T-cell (primary cell): ENCODE measurements at regions of chr5 and their contacts with region 1.

Region 1: DNA sequence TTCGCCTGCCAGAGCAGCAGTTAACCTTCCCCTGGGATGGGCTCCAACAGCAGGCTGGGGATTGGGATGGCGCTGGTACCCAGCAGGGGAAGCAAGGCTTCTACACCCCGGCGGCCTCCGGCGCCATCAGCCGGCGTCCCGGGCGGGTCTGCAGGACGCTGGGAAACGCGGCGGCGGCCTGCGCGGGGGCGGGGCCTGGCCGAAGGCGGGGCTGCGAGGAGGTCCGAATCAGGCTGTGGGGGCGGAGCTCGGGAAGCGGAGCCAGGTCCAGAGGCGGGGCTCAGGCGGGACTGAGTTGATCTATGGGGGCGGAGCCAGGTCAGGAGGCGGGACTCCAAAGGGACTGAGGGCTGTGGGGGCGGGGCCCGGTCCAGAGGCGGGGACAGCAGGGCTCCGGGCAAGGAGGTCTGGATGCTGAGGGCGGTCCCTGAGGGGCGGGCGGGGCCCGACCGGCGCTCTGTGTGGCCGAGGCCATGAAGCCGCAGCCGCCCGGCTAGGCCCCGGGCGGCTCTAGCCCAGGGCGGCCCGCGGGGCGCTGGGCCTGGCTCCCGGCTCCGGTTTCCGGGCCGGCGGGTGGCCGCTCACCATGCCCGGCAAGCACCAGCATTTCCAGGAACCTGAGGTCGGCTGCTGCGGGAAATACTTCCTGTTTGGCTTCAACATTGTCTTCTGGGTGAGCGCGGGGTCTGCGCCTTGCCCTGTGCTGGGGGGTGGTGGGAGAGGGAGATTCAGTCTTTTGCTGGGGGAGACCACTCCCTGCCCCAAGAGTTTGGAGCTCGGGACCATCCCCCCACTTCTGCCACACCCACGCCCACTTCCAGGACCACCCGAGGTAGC is at the start of gene TSPAN17:
- DNase-seq: peak; percentile 73 to 100 (median 90)
- ATAC-seq: peak; percentile 90 to 95 (median 93)
- H3K4me3 ChIP-seq: peak within 1 kb of the TSS; percentile 47 to 63
- H3K4me3 Mint-ChIP-seq: peak within 1 kb of the TSS; percentile 79 to 90 (median 83)
- H3K27ac ChIP-seq: peak within 1 kb of the TSS; percentile 53
- H3K27ac Mint-ChIP-seq: peak within 1 kb of the TSS; percentile 93 to 95
- H3K4me1 ChIP-seq: peaks cover 7 to 60% of the 10 kb centered on the region in 2 experiments
- H3K4me1 Mint-ChIP-seq: peaks cover 52 to 57% (median 55%) of the 10 kb centered on the region in 3 donors
- H3K27me3 ChIP-seq: no peaks in the 10 kb centered on the region
- H3K27me3 Mint-ChIP-seq: no peaks in the 10 kb centered on the region
- total RNA-seq, gene TSPAN17: 20.2 to 39.3 (median 30.0) TPM

Region 2: GRCh38 chr5:175393897-175394296 is 1253.4 kb before region 1 on chr5:
- CTCF ChIA-PET with region 1: no interaction called
- POLR2A ChIA-PET with region 1: no interaction called
- DNase-seq: no peak
- ATAC-seq: no peak
- H3K4me3 ChIP-seq: no peak overlapping the region
- H3K4me3 Mint-ChIP-seq: no peak overlapping the region
- H3K27ac ChIP-seq: no peak overlapping the region
- H3K27ac Mint-ChIP-seq: no peak overlapping the region
- H3K4me1 ChIP-seq: no peaks in the 10 kb centered on the region
- H3K4me1 Mint-ChIP-seq: no peaks in the 10 kb centered on the region
- H3K27me3 ChIP-seq: peaks cover 0 to 14% of the 10 kb centered on the region in 2 experiments
- H3K27me3 Mint-ChIP-seq: peaks cover 17 to 26% of the 10 kb centered on the region in 2 donors

Region 3: DNA sequence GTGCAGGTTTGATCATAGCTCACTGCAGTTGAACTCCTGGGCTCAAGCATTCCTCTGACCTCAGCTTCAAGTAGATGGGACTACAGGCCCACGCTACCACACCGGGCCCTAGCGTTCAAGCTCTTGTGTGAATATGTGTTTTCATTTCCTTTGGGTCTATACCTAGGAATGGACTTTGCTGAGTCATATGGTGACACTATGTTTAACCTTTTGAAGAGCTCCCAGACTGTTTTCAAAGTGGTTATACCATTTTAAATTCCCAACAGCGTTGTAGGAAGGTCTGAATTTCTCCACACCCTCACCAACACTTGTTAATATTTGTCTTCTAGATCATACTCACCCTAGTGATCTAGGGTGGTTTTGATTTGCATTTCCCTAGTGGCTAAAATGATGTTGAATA is 165.5 kb before region 1 on chr5:
- CTCF ChIA-PET with region 1: no interaction called
- POLR2A ChIA-PET with region 1: no interaction called
- DNase-seq: no peak
- ATAC-seq: no peak
- H3K4me3 ChIP-seq: no peak overlapping the region
- H3K4me3 Mint-ChIP-seq: no peak overlapping the region
- H3K27ac ChIP-seq: no peak overlapping the region
- H3K27ac Mint-ChIP-seq: no peak overlapping the region
- H3K4me1 ChIP-seq: peaks cover 0 to 3% of the 10 kb centered on the region in 2 experiments
- H3K4me1 Mint-ChIP-seq: peaks cover 32 to 40% (median 33%) of the 10 kb centered on the region in 3 donors
- H3K27me3 ChIP-seq: no peaks in the 10 kb centered on the region
- H3K27me3 Mint-ChIP-seq: no peaks in the 10 kb centered on the region

Region 4: GRCh38 chr5:176660860-176661641 is 13.8 kb after region 1 on chr5:
- CTCF ChIA-PET with region 1: interaction called, 9 to 15 read pairs
- POLR2A ChIA-PET with region 1: no interaction called
- DNase-seq: peak; percentile 53 to 91 (median 69)
- ATAC-seq: peak; percentile 74 to 80 (median 78)
- H3K4me3 ChIP-seq: peak overlapping the region in 1 of 2 donors; percentile 14
- H3K4me3 Mint-ChIP-seq: peak overlapping the region in 2 of 3 donors; percentile 24 to 40
- H3K27ac ChIP-seq: no peak overlapping the region
- H3K27ac Mint-ChIP-seq: peak overlapping the region; percentile 52 to 67
- H3K4me1 ChIP-seq: peaks cover 7 to 36% of the 10 kb centered on the region in 2 experiments
- H3K4me1 Mint-ChIP-seq: peaks cover 28 to 36% (median 32%) of the 10 kb centered on the region in 3 donors
- H3K27me3 ChIP-seq: peaks cover 0 to 36% of the 10 kb centered on the region in 2 experiments
- H3K27me3 Mint-ChIP-seq: peaks cover 15 to 17% of the 10 kb centered on the region in 2 donors